ENCODE measurements at regions of chr15 and their contacts with region 1.

Region 1: DNA sequence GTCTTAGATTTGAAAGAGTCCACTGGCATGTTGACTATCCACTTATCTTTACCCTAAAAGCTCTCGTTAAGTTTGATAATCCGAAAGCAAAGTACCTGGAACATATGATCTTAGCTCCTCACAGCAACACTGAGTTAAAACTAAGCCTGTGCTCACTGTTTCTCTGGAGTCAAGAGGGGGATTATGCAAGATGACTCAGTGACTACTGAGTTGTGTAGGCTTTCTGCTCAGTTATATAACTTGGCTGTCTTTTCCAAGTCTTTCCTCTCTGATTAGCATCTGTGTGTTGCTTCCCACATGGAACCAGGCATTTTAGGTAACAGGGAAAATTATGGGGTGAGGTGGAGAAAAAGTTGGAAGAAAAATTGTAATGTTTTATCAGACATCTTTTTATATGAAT is 31.2 kb upstream of the MYO5C start:
- H3K4me3 Mint-ChIP-seq: no peak overlapping the region
- H3K27ac Mint-ChIP-seq: no peak overlapping the region
- H3K4me1 Mint-ChIP-seq: no peaks in the 10 kb centered on the region
- H3K27me3 Mint-ChIP-seq: no peaks in the 10 kb centered on the region

Region 2: GRCh38 chr15:51917493-51917892 is 409.3 kb before region 1 on chr15:
- intact Hi-C with region 1: loop called (anchors 10 kb)
- H3K4me3 Mint-ChIP-seq: no peak overlapping the region
- H3K27ac Mint-ChIP-seq: peak overlapping the region; percentile 62
- H3K4me1 Mint-ChIP-seq: no peaks in the 10 kb centered on the region
- H3K27me3 Mint-ChIP-seq: no peaks in the 10 kb centered on the region

Region 3: DNA sequence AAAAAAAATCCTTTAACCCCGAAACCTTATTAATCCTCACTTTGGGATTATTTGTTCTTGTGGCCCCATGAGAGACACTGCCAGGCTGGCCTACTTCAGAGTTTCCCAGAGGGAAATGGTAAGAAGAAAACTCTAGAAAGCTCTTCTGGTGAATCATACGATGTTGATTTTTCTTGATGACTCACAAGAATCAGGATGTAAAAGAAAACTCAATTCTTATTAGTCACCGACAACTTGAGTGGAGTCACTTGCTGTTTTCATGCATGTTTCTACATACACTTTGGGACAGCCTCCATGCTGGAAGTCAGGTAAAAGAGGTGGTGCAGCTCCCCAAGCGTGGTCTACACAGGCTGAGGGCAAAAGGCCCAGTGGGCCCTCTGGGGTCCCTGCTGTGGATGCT is 74.0 kb before region 1 on chr15:
- intact Hi-C with region 1: no loop called
- H3K4me3 Mint-ChIP-seq: no peak overlapping the region
- H3K27ac Mint-ChIP-seq: no peak overlapping the region
- H3K4me1 Mint-ChIP-seq: peaks cover 38% of the 10 kb centered on the region
- H3K27me3 Mint-ChIP-seq: no peaks in the 10 kb centered on the region

Measured in dendritic cell treated with granulocyte-macrophage colony-stimulating factor and Interleukin-4, amounts not matched to agents 40 ng/mL and 50 ng/mL, for 4 days (primary cell).